Breast epithelium (tissue), 4 donors: ENCODE measurements at regions of chr16 and their contacts with region 1.

Region 1: DNA sequence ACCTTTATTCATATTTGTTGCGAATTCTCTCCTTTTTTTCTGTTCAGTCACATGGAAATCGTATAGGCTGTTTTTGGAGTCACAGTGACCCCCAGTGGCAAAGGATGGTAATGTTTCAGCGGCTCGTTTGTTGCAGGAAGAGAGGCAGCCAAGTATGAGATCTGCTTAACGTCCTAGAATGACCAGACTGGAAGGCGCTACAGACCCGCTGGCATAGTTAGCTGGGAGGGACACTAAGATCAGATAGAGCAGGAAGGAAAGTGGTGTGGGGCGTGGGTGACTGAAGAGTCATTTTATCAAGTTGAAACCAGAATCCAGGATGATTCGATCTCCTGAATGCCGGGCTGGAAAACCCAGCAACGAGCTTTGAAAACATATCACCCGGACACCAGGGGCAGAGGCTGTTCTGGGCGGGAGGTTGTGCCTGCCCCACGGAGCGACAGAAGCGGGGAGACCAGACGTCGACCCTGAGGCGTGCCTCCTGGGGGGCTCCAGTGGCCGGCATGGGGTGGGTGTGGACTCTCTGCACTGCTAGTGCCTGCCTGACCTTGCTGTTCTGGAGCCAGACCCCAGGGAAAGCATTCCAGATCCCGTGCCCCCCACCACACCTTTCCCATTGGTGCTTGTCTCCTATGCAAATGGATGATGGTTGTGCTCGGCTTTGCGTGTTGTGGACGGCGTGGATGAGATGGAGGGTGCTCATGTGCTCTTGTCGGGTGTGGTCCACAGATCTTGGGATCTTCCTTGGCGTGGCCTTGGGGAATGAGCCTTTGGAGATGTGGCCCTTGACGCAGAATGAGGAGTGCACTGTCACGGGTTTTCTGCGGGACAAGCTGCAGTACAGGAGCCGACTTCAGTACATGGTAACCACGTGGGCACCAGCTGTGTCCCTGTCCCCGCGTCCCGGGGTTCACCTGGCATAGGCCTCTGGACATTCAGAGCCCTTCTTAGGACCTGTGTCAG is 7.7 kb downstream of the IL34 start:
- DNase-seq: peak; percentile 79 to 87
- H3K4me3 ChIP-seq: peak overlapping the region; percentile 11 to 52 (median 20)
- H3K27ac ChIP-seq: peak overlapping the region; percentile 13 to 32
- H3K4me1 ChIP-seq: peaks cover 0 to 3% of the 10 kb centered on the region in 2 donors
- H3K27me3 ChIP-seq: no peaks in the 10 kb centered on the region
- CTCF ChIP-seq: peak; percentile 97 to 98 (median 97)
- POLR2A ChIP-seq: no peak

Region 2: GRCh38 chr16:70534971-70535370 is 119.1 kb before region 1 on chr16:
- intact Hi-C with region 1: loop called (anchors 10 kb)
- DNase-seq: no peak
- H3K4me3 ChIP-seq: no peak overlapping the region
- H3K27ac ChIP-seq: no peak overlapping the region
- H3K4me1 ChIP-seq: no peaks in the 10 kb centered on the region
- H3K27me3 ChIP-seq: no peaks in the 10 kb centered on the region
- CTCF ChIP-seq: no peak
- POLR2A ChIP-seq: no peak

Region 3: GRCh38 chr16:70577256-70577698 is 76.8 kb before region 1 on chr16:
- intact Hi-C with region 1: no loop called
- DNase-seq: peak; percentile 52 to 94
- H3K4me3 ChIP-seq: no peak overlapping the region
- H3K27ac ChIP-seq: peak overlapping the region; percentile 87 to 91
- H3K4me1 ChIP-seq: peaks cover 11 to 25% of the 10 kb centered on the region in 2 donors
- H3K27me3 ChIP-seq: no peaks in the 10 kb centered on the region
- CTCF ChIP-seq: no peak
- POLR2A ChIP-seq: no peak